ENCODE measurements at regions of chr20 and their contacts with region 1.

Region 1: GRCh38 chr20:956330-956951 is 40.3 kb upstream of the ANGPT4 start:
- DNase-seq: peak; percentile 36 to 83 (median 67)
- ATAC-seq: peak; percentile 83 to 91 (median 85)
- H3K4me3 ChIP-seq: no peak overlapping the region
- H3K4me3 Mint-ChIP-seq: no peak overlapping the region
- H3K27ac ChIP-seq: no peak overlapping the region
- H3K27ac Mint-ChIP-seq: no peak overlapping the region
- H3K4me1 ChIP-seq: peaks cover 0 to 5% of the 10 kb centered on the region in 2 experiments
- H3K4me1 Mint-ChIP-seq: peaks cover 2 to 7% (median 4%) of the 10 kb centered on the region in 3 donors
- H3K27me3 ChIP-seq: peaks cover 0 to 79% of the 10 kb centered on the region in 2 experiments
- H3K27me3 Mint-ChIP-seq: peaks cover 26 to 57% of the 10 kb centered on the region in 2 donors

Region 2: DNA sequence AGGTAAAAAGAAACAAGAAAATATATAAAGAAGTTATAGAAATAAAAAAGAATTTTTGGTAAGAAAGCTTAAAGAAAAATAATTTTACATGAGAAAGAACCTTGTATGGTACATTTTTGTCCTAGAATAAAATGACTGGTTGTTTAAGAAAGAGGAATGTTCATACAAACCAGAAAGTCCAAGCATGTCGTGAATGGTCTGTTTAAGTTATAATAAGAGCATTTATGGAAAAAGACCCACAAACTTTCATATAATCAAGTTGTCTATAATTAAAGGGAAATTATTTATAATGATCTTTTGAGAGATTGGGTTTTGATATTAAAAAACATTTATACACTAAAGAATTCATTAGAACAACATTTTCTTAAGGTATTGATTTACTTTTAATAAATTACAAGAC is 150.7 kb before region 1 on chr20:
- CTCF ChIA-PET with region 1: interaction called, 5 to 10 read pairs
- POLR2A ChIA-PET with region 1: no interaction called
- DNase-seq: no peak
- ATAC-seq: no peak
- H3K4me3 ChIP-seq: no peak overlapping the region
- H3K4me3 Mint-ChIP-seq: no peak overlapping the region
- H3K27ac ChIP-seq: no peak overlapping the region
- H3K27ac Mint-ChIP-seq: no peak overlapping the region
- H3K4me1 ChIP-seq: no peaks in the 10 kb centered on the region
- H3K4me1 Mint-ChIP-seq: no peaks in the 10 kb centered on the region
- H3K27me3 ChIP-seq: peaks cover 2 to 14% of the 10 kb centered on the region in 2 experiments
- H3K27me3 Mint-ChIP-seq: peaks cover 7 to 26% of the 10 kb centered on the region in 2 donors

Region 3: GRCh38 chr20:815914-816606 is 140.4 kb before region 1 on chr20:
- CTCF ChIA-PET with region 1: interaction called, 18 to 28 read pairs
- POLR2A ChIA-PET with region 1: no interaction called
- DNase-seq: peak; percentile 16 to 85 (median 62)
- ATAC-seq: peak; percentile 48 to 65 (median 50)
- H3K4me3 ChIP-seq: no peak overlapping the region
- H3K4me3 Mint-ChIP-seq: no peak overlapping the region
- H3K27ac ChIP-seq: no peak overlapping the region
- H3K27ac Mint-ChIP-seq: no peak overlapping the region
- H3K4me1 ChIP-seq: peaks cover 0 to 11% of the 10 kb centered on the region in 2 experiments
- H3K4me1 Mint-ChIP-seq: peaks cover 6 to 16% (median 12%) of the 10 kb centered on the region in 3 donors
- H3K27me3 ChIP-seq: peaks cover 0 to 20% of the 10 kb centered on the region in 2 experiments
- H3K27me3 Mint-ChIP-seq: peaks cover 22 to 27% of the 10 kb centered on the region in 2 donors

Measured in T-cell (primary cell).